Sciatic nerve (tissue), 2 donors: ENCODE measurements at regions of chr11 and their contacts with region 1.

Region 1: GRCh38 chr11:120108154-120108865 is 29.6 kb downstream of the TRIM29 start:
- DNase-seq: peak; percentile 87
- ATAC-seq: peak; percentile 82

Region 2: DNA sequence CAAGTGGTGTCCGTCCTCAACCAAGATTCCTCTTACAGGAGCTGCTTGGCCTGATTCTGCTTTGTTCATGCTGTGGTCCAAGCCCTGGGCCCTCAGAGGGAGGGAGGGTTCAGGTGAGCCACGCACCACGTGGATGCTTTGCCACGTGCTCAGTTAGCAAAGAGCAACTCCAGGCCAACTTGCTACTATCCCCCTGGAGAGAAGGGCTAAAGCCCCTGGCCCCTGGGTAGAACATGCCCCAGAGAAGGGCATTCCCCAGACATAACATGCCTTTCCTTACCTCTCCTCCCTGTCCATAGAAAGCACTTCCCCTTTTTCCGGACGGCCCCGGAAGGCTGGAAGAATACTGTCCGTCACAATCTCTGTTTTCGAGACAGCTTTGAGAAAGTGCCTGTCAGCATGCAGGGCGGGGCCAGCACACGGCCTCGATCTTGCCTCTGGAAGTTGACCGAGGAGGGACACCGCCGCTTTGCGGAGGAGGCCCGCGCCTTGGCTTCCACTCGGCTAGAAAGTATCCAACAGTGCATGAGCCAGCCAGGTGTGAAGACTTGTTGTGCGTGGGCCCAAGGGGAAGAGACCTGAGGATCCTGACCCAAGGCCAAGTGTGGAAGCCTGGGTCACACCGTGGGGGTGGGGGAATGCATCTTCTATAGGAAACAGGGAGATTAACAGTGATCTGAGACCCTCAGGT is 1128.0 kb before region 1 on chr11:
- intact Hi-C with region 1: no loop called
- DNase-seq: peak; percentile 70
- ATAC-seq: peak; percentile 82

Region 3: GRCh38 chr11:119481021-119481666 is 627.2 kb before region 1 on chr11:
- intact Hi-C with region 1: loop called (anchors 10 kb)
- DNase-seq: peak; percentile 92
- ATAC-seq: peak; percentile 94

Region 4: DNA sequence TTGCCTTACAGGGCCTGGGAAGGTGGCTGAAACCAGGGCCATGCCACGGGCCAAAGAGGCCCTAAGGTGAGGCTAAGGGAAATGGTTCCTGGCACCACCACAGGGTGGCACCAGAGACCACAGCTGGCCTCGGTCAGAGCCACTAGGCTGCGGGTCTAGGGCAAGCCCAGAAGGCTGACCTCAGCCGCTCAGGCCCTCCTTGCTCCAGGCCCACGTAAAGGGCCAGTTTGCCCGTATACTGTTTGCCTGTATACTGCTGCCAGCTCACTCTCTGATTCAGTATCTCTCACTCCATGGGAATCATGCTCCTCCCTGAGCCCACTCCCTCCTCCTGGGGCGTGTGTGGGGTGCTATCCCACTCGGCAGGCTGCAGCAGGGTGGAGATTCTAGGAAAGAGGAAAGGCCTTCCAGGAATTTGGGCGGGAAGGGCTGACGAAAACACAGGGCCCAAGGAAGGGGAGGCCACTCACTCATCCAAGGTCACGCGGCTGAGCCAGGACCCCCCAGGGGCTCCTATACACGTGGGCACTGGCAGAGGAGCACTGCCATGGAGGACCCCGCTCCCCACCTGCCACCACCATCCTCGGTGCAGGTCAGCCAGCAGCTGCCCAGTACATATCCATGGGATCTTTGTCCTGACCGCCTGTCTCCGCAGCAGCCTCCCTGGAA is 441.7 kb before region 1 on chr11:
- intact Hi-C with region 1: loop called (anchors 5 kb)
- DNase-seq: peak; percentile 90
- ATAC-seq: peak; percentile 87